Colonic mucosa (tissue), 4 donors: ENCODE measurements at regions of chr19 and their contacts with region 1.

Region 1: GRCh38 chr19:14147797-14148605 is 11.6 kb upstream of the ASF1B start:
- DNase-seq: peak; percentile 72
- H3K4me3 ChIP-seq: no peak overlapping the region
- H3K27ac ChIP-seq: no peak overlapping the region
- H3K4me1 ChIP-seq: peaks cover 6% of the 10 kb centered on the region
- H3K27me3 ChIP-seq: no peaks in the 10 kb centered on the region
- CTCF ChIP-seq: peak; percentile 79

Region 2: GRCh38 chr19:14347999-14348889 is 200.2 kb after region 1 on chr19:
- intact Hi-C with region 1: loop called (anchors 5 kb)
- DNase-seq: peak; percentile 73
- H3K4me3 ChIP-seq: peak overlapping the region; percentile 3
- H3K27ac ChIP-seq: no peak overlapping the region
- H3K4me1 ChIP-seq: no peaks in the 10 kb centered on the region
- H3K27me3 ChIP-seq: no peaks in the 10 kb centered on the region
- CTCF ChIP-seq: peak; percentile 98

Region 3: GRCh38 chr19:14472202-14472938 is 324.4 kb after region 1 on chr19:
- intact Hi-C with region 1: loop called (anchors 10 kb)
- DNase-seq: peak; percentile 85
- H3K4me3 ChIP-seq: peak overlapping the region; percentile 13
- H3K27ac ChIP-seq: no peak overlapping the region
- H3K4me1 ChIP-seq: peaks cover 9% of the 10 kb centered on the region
- H3K27me3 ChIP-seq: peaks cover 27% of the 10 kb centered on the region
- CTCF ChIP-seq: peak; percentile 99